Activated CD8-positive, alpha-beta T cell treated with anti-CD3 and anti-CD28 coated beads for 36 hours (primary cell): ENCODE measurements at regions of chr15 and their contacts with region 1.

Region 1: GRCh38 chr15:84929744-84930371 is 45.4 kb downstream of the SLC28A1 start:
- DNase-seq: peak; percentile 41
- ATAC-seq: peak; percentile 14
- H3K4me3 Mint-ChIP-seq: no peak overlapping the region
- H3K27ac Mint-ChIP-seq: no peak overlapping the region
- H3K4me1 Mint-ChIP-seq: peaks cover 5% of the 10 kb centered on the region
- H3K27me3 Mint-ChIP-seq: no peaks in the 10 kb centered on the region
- CTCF ChIP-seq: no peak

Region 2: DNA sequence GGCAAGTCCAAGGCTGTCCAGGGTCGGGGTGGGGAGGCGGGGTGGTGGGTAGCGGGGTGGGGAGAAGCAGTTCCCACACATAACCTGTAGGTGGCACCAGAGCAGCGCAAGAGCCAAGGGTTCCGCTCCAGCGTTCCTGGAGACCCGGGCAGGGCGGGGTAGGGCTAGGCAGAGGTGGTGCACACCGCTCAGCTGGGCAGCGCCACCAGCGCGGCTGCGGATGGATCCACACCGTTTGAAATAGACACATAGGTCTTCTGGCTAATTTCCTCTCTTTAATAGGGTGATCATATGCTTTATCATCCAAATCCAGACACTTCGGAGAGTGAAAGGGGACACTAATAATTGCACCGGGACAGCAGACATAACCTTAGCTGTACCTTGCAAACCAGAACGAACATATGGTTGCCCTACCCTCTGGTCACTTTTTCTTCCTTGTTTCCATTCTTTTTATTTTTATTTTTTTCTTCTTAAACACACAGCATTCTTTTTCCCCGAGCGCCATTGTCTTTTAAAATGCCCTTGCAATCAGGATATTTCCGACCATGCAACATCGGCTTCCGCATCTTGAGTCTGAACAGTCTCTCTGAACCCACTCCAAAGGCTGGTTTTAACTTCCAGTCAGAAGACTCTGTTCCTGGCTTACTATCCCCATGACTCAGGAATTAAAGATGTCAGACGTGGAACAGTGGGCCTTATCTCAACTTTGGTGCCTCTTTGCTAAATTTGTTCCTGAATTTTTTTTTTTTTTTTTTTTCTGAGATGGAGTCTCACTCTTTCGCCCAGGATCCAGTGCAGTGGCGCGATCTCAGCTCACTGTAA is 341.6 kb before region 1 on chr15:
- CTCF ChIA-PET with region 1: interaction called, 35 read pairs
- POLR2A ChIA-PET with region 1: no interaction called
- intact Hi-C with region 1: loop called (anchors 1 kb)
- DNase-seq: peak; percentile 92
- ATAC-seq: peak; percentile 100
- H3K4me3 Mint-ChIP-seq: peak overlapping the region; percentile 46
- H3K27ac Mint-ChIP-seq: no peak overlapping the region
- H3K4me1 Mint-ChIP-seq: peaks cover 3% of the 10 kb centered on the region
- H3K27me3 Mint-ChIP-seq: peaks cover 4% of the 10 kb centered on the region
- CTCF ChIP-seq: peak; percentile 83

Region 3: DNA sequence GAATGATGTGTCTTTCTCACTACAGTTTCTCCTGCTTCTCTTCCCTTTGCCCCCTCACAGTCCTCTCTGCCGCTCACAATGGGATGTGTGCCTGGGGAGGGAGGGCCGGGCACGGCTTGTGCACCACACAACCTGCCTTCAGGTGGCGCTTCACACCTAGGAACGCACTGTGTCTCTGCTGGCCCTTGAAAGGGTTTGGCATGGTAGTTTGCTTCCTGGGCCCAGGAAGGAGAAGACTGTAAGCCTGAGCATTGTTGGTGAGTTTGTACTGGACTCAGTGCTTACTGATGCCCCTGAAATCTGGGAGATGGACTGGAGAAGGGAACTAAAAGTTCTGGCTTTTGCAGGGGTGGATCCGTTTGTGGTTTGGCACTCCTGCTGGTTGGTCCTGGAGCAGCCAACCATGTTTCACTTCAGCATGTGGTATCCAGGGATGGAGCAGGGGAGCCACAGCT is 103.5 kb before region 1 on chr15:
- CTCF ChIA-PET with region 1: interaction called, 14 read pairs
- POLR2A ChIA-PET with region 1: no interaction called
- intact Hi-C with region 1: no loop called
- DNase-seq: peak; percentile 52
- ATAC-seq: peak; percentile 62
- H3K4me3 Mint-ChIP-seq: no peak overlapping the region
- H3K27ac Mint-ChIP-seq: no peak overlapping the region
- H3K4me1 Mint-ChIP-seq: no peaks in the 10 kb centered on the region
- H3K27me3 Mint-ChIP-seq: no peaks in the 10 kb centered on the region
- CTCF ChIP-seq: no peak

Region 4: GRCh38 chr15:84908564-84908963 is 21.3 kb before region 1 on chr15:
- CTCF ChIA-PET with region 1: interaction called, 13 read pairs
- POLR2A ChIA-PET with region 1: no interaction called
- intact Hi-C with region 1: no loop called
- DNase-seq: no peak
- ATAC-seq: no peak
- H3K4me3 Mint-ChIP-seq: no peak overlapping the region
- H3K27ac Mint-ChIP-seq: no peak overlapping the region
- H3K4me1 Mint-ChIP-seq: peaks cover 9% of the 10 kb centered on the region
- H3K27me3 Mint-ChIP-seq: no peaks in the 10 kb centered on the region
- CTCF ChIP-seq: no peak

Region 5: DNA sequence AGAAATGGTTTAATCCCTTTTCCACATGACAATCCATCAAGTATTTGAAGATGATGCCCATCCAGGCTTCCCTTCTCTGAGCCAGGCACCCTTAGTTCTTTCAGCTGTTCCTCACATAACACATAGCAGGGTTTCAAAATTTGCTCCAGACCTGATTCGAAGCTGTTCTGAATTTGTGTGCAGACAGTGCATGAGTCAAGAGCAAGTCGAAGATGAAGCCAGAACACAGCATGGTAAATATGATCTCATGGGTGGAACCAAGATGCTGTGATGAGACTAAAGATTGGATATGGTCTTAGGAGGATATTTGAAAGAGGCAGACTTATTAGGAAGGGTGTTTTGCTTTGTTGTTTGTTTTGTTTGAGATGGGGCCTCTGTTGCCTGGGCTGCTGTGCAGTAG is 19.2 kb after region 1 on chr15:
- CTCF ChIA-PET with region 1: no interaction called
- POLR2A ChIA-PET with region 1: no interaction called
- intact Hi-C with region 1: no loop called
- DNase-seq: no peak
- ATAC-seq: no peak
- H3K4me3 Mint-ChIP-seq: no peak overlapping the region
- H3K27ac Mint-ChIP-seq: no peak overlapping the region
- H3K4me1 Mint-ChIP-seq: no peaks in the 10 kb centered on the region
- H3K27me3 Mint-ChIP-seq: no peaks in the 10 kb centered on the region
- CTCF ChIP-seq: no peak

Region 6: GRCh38 chr15:84961114-84961452 is 31.2 kb after region 1 on chr15:
- CTCF ChIA-PET with region 1: no interaction called
- POLR2A ChIA-PET with region 1: no interaction called
- intact Hi-C with region 1: no loop called
- DNase-seq: no peak
- ATAC-seq: no peak
- H3K4me3 Mint-ChIP-seq: no peak overlapping the region
- H3K27ac Mint-ChIP-seq: no peak overlapping the region
- H3K4me1 Mint-ChIP-seq: peaks cover 6% of the 10 kb centered on the region
- H3K27me3 Mint-ChIP-seq: peaks cover 8% of the 10 kb centered on the region
- CTCF ChIP-seq: no peak

Region 7: DNA sequence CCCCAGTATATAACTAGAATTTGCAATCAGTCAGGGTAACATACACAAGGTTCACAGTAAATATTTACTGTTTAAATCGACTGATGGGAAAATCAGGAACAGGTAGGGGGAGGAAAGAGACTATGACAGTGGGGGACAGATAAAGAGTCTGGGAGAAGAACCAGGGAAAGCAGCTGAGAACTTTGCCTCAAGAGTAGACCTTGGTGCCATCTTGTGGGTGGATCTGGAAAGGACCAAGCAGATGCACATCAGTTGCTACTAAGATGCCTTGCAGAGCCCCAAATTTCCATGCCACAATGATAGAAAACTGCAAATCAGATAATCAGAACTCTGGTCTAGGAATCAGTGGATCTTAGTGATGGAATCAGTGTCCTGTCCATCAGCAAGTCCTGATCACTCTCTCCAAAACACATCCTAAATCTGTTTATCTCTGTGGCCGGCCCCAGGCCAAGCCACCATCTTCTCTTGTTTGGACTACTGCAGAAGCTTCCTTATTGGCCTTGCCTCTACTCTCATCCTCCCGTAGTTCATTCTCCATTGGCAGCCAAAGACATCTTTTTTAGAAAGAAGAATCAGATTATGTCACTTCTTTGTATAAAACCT is 114.5 kb after region 1 on chr15:
- CTCF ChIA-PET with region 1: interaction called, 13 read pairs
- POLR2A ChIA-PET with region 1: no interaction called
- intact Hi-C with region 1: no loop called
- DNase-seq: peak; percentile 64
- ATAC-seq: peak; percentile 47
- H3K4me3 Mint-ChIP-seq: no peak overlapping the region
- H3K27ac Mint-ChIP-seq: no peak overlapping the region
- H3K4me1 Mint-ChIP-seq: peaks cover 18% of the 10 kb centered on the region
- H3K27me3 Mint-ChIP-seq: no peaks in the 10 kb centered on the region
- CTCF ChIP-seq: peak; percentile 49